ENCODE measurements at regions of chr1 and their contacts with region 1.

Region 1: GRCh38 chr1:228139944-228140656 is at the start of gene GUK1:
- DNase-seq: peak; percentile 100
- H3K4me3 ChIP-seq: peak within 1 kb of the TSS; percentile 86
- H3K4me3 Mint-ChIP-seq: peak within 1 kb of the TSS; percentile 91 to 99 (median 98)
- H3K27ac ChIP-seq: peak within 1 kb of the TSS; percentile 98
- H3K27ac Mint-ChIP-seq: peak within 1 kb of the TSS; percentile 98 to 100 (median 99)
- H3K4me1 ChIP-seq: peaks cover 50% of the 10 kb centered on the region
- H3K4me1 Mint-ChIP-seq: peaks cover 60 to 75% (median 61%) of the 10 kb centered on the region in 3 donors
- H3K27me3 ChIP-seq: no peaks in the 10 kb centered on the region
- H3K27me3 Mint-ChIP-seq: peaks cover 0 to 4% of the 10 kb centered on the region in 2 donors
- total RNA-seq, gene GUK1: 222 to 245 TPM

Region 2: GRCh38 chr1:226973898-226974543 is 1166.1 kb before region 1 on chr1:
- CTCF ChIA-PET with region 1: no interaction called
- POLR2A ChIA-PET with region 1: interaction called, 13 read pairs
- DNase-seq: no peak
- H3K4me3 ChIP-seq: no peak overlapping the region
- H3K4me3 Mint-ChIP-seq: no peak overlapping the region
- H3K27ac ChIP-seq: no peak overlapping the region
- H3K27ac Mint-ChIP-seq: peak overlapping the region in 2 of 8 donors; percentile 54 to 62
- H3K4me1 ChIP-seq: no peaks in the 10 kb centered on the region
- H3K4me1 Mint-ChIP-seq: peaks cover 0 to 17% (median 6%) of the 10 kb centered on the region in 3 donors
- H3K27me3 ChIP-seq: no peaks in the 10 kb centered on the region
- H3K27me3 Mint-ChIP-seq: no peaks in the 10 kb centered on the region

Measured in CD8-positive, alpha-beta memory T cell (primary cell).